ENCODE measurements at regions of chr6 and their contacts with region 1.

Region 1: GRCh38 chr6:109440331-109441068 is at the starts of genes PPIL6 and SMPD2:
- H3K4me3 Mint-ChIP-seq: peak within 1 kb of the TSS; percentile 81
- H3K27ac Mint-ChIP-seq: peak within 1 kb of the TSS; percentile 86
- H3K4me1 Mint-ChIP-seq: peaks cover 49% of the 10 kb centered on the region
- H3K27me3 Mint-ChIP-seq: no peaks in the 10 kb centered on the region

Region 2: DNA sequence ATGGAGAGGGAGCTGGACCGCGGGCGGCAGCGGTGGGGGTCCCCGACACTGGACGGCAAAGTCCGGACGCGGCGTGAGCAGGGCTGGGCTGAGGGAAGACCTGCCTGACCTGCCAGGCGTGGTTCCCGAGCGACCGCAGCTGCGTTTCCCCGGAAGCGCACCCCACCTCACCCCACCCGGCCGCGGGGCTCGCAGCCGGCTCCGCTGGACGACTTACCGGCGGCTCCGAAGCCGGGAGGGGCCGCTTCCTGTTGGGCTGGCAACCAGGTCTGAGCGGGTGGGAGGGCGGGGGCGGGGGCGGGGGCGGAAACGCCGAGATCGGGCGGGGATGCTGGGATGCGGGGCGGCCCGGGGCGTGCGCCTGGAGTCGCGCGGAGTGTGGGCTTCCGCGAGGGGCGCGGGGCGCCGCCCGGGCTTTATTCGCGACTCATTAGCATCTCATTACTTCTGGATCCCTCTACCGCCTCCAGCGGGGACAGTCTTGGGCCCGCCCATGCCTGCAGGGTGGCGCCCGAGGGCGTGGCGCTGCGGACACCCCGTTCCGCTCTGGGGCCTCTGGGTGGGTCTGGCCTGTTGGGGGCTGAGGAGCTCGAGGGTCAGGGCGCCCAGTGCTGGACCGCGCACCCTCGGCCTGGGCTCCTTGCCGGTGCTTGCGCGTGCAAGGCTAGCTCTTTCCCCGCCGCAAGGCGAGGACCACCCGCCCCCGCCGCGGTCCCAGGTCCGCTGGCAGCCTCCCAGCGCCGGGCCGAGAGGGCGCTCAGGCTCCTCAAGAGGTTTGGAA is 15.2 kb after region 1 on chr6 and contains the start of gene MICAL1:
- intact Hi-C with region 1: loop called (anchors 2 kb)
- H3K4me3 Mint-ChIP-seq: peak within 1 kb of the TSS; percentile 96
- H3K27ac Mint-ChIP-seq: peak within 1 kb of the TSS; percentile 95
- H3K4me1 Mint-ChIP-seq: peaks cover 72% of the 10 kb centered on the region
- H3K27me3 Mint-ChIP-seq: no peaks in the 10 kb centered on the region

Region 3: DNA sequence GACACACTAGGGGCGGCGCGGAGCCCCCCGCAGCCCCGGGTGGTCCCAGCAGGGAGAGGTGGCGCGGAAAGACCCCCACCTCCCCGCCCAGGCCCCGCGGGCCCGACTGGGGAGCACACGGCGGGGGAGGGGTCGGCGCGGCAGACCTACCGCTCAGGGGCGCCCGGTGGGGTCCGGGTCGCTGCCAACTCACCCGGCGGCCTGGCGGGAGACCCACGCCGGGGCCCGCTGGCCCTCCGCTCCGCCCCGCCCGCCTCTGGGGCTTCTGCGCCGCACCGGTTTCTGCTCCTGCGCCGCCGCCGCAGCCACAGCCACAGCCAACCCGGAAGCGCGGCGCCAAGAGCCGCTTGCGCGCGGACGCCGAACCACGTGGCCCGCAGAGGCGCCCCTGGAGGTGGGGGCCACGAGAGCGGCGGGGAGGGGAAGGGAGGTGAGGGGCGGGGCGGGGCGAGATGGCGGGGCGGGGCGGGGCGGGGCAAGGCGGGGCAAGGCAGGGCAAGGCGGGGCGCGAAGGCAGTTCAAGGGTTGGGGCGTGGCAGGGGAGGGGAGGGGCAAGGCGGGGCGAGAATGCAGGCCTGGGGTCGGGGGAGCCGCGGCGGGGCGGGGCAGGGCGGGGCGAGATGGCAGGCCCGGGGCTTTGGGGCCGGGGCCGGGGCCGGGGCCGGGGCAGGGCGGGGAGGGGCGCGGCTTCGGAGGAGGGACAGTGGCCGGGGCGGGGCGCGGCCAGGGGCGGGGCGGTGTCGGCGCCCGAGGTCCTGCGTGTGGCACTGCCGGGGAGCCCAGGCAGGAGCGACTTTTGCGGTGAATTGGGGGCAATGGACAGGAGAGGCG is 42.6 kb after region 1 on chr6 and contains the start of gene ZBTB24:
- intact Hi-C with region 1: loop called (anchors 5 kb)
- H3K4me3 Mint-ChIP-seq: peak within 1 kb of the TSS; percentile 81
- H3K27ac Mint-ChIP-seq: peak within 1 kb of the TSS; percentile 79
- H3K4me1 Mint-ChIP-seq: peaks cover 47% of the 10 kb centered on the region
- H3K27me3 Mint-ChIP-seq: peaks cover 10% of the 10 kb centered on the region

Region 4: DNA sequence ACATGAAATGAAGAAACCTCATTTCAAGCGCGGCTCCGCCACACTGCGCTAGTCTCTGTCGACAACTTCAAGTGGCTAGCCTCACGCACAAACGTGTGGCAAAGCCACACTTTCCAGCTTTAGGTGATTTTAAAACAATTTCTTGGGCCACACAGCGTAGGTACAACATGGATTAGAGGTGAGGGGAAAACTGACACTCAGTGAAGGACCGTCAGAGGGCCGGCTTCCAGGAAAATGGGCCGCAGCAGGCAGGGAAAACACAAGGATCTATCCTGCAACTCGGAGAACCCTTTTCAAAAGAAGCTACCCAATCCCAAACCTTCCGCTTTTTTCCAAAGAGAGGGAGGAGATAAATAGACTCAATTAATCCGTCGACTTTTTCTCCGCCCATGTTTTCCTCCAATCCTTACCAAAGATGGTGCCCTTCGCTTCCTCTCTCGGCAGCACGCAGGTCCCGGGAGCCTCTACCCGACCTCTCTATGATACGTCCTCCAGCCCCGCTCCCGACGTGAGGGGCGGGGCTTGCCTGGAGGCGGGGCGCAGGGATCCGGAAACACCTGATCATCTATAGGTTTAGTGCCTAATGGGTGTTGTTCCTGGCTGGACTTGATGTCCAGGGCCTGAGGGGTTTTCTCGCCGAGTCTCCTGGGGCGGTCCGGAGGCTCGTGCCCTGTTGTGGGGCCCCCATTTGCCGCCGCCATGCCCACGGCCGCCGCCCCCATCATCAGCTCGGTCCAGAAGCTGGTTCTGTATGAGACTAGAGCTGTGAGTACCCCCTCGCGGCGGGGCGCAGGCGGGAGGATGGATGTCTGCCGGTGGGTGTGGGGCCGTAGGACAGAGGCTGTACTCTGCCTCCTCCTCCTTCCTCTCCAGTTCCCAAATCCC is 250.5 kb after region 1 on chr6 and contains the starts of genes AK9 and FIG4:
- intact Hi-C with region 1: loop called (anchors 5 kb)
- H3K4me3 Mint-ChIP-seq: peak within 1 kb of the TSS; percentile 85
- H3K27ac Mint-ChIP-seq: peak within 1 kb of the TSS; percentile 96
- H3K4me1 Mint-ChIP-seq: peaks cover 48% of the 10 kb centered on the region
- H3K27me3 Mint-ChIP-seq: no peaks in the 10 kb centered on the region

Measured in dendritic cell treated with granulocyte-macrophage colony-stimulating factor and Interleukin-4, amounts not matched to agents 40 ng/mL and 50 ng/mL, for 4 days (primary cell).